ENCODE measurements at regions of chr5 and their contacts with region 1.

Region 1: GRCh38 chr5:147935032-147935431 is 28.7 kb upstream of the C5orf46 start:
- ATAC-seq: peak in 6 of 8 experiments; percentile 41 to 89 (median 67)
- H3K4me3 ChIP-seq: no peak overlapping the region
- H3K27ac ChIP-seq: no peak overlapping the region
- H3K4me1 ChIP-seq: no peaks in the 10 kb centered on the region

Region 2: DNA sequence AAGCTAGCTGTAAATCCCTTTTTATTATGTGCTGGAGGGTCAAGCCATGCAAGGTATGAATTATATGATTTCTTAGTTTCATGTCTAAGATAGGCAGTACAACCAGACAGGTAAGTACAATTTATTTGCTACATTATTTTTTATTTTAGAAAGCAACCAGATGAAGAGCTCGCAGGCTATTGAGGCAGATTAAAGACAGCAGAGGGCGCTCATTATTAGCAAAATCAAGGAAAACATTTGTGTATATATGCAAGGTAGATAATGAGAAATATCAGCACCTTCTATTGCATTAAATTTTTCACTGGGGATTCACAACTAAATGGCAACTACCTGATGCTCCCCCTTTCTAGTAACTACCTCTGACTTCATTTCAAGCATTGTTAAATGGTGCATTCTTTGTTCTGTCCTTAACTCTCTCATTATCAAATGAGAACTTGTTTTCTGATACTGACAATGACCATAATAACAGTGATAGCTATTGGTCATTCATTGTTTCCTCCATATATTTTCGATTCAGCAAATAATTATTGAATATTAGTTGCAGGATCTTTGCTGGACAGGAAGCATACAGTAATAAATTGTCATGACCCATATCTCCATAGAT is 47.9 kb before region 1 on chr5:
- in situ Hi-C with region 1: loop called in 1 of 9 experiments (anchors 10 kb)
- ATAC-seq: peak in 4 of 8 experiments; percentile 35 to 59 (median 38)
- H3K4me3 ChIP-seq: no peak overlapping the region
- H3K27ac ChIP-seq: no peak overlapping the region
- H3K4me1 ChIP-seq: no peaks in the 10 kb centered on the region

Region 3: DNA sequence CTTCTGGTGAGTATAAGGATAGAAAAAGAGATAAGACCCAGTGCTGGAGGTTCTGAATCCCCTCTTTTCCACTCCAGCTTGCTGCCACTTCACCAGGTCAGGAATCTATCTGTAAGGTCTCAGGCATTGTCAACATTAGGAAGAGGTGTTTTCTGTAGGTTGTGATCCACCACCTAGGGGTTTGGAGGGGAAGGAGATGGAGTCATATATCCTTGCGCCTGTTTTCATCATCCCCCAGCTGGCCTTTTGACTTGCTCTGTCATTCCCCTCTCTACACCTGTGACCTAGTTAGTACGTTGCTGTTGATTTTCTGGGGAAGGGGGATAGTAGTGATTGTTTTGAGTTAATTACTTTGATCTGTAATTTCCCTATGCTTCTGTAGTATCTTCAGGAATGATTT is 149.2 kb after region 1 on chr5:
- in situ Hi-C with region 1: no loop called
- ATAC-seq: peak in 1 of 8 experiments; percentile 39
- H3K4me3 ChIP-seq: no peak overlapping the region
- H3K27ac ChIP-seq: no peak overlapping the region
- H3K4me1 ChIP-seq: no peaks in the 10 kb centered on the region

Region 4: GRCh38 chr5:148290271-148291195 is 355.5 kb after region 1 on chr5:
- in situ Hi-C with region 1: no loop called
- ATAC-seq: peak in 4 of 8 experiments; percentile 60 to 79 (median 70)
- H3K4me3 ChIP-seq: no peak overlapping the region
- H3K27ac ChIP-seq: no peak overlapping the region
- H3K4me1 ChIP-seq: no peaks in the 10 kb centered on the region

Measured in motor neuron (in vitro differentiated cells).